ENCODE measurements at regions of chr6 and their contacts with region 1.

Region 1: DNA sequence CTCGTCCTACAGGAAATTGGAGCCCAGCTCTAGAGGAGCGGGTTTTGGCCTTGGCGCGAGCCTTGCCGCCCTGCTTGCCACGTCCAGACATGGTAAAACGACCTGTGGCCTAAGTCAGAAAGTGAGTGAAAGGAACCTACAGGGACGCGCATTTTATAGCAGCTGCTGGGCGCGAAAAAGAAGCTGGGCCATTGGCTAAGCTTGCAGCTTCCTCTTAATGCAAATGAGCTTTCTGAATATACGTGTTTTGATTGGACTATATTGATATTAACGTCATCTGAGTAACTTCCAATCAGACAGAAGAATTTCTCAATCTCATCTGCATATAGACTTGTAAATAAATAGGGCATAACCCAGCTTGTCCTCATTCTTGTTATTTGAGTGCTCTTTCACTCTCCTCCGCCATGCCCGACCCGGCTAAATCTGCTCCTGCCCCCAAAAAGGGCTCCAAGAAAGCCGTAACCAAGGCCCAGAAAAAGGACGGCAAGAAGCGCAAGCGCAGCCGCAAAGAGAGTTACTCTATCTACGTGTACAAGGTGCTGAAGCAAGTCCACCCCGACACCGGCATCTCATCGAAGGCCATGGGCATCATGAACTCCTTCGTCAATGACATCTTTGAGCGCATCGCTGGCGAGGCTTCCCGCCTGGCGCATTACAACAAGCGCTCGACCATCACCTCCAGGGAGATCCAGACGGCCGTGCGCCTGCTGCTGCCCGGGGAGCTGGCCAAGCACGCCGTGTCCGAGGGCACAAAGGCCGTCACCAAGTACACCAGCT is 18.9 kb downstream of the OR2B2 start:
- DNase-seq: peak; percentile 92
- ATAC-seq: peak; percentile 63
- H3K4me3 Mint-ChIP-seq: no peak overlapping the region
- H3K27ac Mint-ChIP-seq: no peak overlapping the region
- H3K4me1 Mint-ChIP-seq: peaks cover 28% of the 10 kb centered on the region
- H3K27me3 Mint-ChIP-seq: no peaks in the 10 kb centered on the region
- CTCF ChIP-seq: no peak

Region 2: DNA sequence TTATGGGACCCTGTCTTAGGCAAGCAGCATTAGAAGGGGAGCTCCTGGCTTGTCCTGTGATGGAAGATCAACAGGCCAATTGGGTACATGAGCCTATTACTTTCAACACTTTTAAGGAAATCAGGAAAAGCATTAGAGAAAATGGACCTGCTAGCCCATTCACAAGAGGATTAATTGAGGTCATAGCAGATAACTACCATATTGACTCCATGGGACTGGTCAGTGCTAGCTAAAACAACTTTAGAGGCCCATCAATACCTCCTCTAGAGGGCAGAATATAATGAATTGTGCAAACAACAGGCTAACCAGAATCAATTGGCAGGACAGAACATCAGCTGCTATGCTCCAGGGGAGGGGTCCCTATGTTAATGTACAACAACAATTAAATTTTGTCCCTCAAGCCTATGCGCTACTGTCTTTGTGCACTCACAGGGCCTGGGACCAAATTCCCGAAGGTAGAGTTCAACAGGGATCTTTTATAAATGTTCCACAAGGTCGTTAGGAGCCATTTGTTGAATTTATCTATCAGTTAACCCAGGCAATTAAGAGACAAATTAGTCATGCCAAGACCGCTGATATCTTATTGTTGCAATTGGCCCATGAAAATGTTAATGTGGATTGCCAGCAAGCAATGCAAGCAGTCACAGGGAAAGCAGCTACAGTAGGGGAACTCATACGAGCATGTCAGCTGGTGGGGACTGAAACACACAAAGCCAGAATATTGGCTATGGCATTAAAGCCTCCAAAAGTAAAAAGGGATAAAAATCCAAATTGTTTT is 1634.9 kb before region 1 on chr6:
- CTCF ChIA-PET with region 1: no interaction called
- POLR2A ChIA-PET with region 1: no interaction called
- intact Hi-C with region 1: no loop called
- DNase-seq: no peak
- ATAC-seq: no peak
- H3K4me3 Mint-ChIP-seq: no peak overlapping the region
- H3K27ac Mint-ChIP-seq: no peak overlapping the region
- H3K4me1 Mint-ChIP-seq: peaks cover 5% of the 10 kb centered on the region
- H3K27me3 Mint-ChIP-seq: no peaks in the 10 kb centered on the region
- CTCF ChIP-seq: peak; percentile 18

Region 3: GRCh38 chr6:27138837-27139755 is 754.2 kb before region 1 on chr6:
- CTCF ChIA-PET with region 1: no interaction called
- POLR2A ChIA-PET with region 1: interaction called, 69 read pairs
- intact Hi-C with region 1: no loop called
- DNase-seq: peak; percentile 83
- ATAC-seq: peak; percentile 80
- H3K4me3 Mint-ChIP-seq: peak overlapping the region; percentile 95
- H3K27ac Mint-ChIP-seq: peak overlapping the region; percentile 98
- H3K4me1 Mint-ChIP-seq: peaks cover 33% of the 10 kb centered on the region
- H3K27me3 Mint-ChIP-seq: no peaks in the 10 kb centered on the region
- CTCF ChIP-seq: no peak

Region 4: GRCh38 chr6:27772261-27773001 is 120.8 kb before region 1 on chr6:
- CTCF ChIA-PET with region 1: interaction called, 43 read pairs
- POLR2A ChIA-PET with region 1: interaction called, 3 read pairs
- intact Hi-C with region 1: no loop called
- DNase-seq: peak; percentile 93
- ATAC-seq: peak; percentile 99
- H3K4me3 Mint-ChIP-seq: peak overlapping the region; percentile 29
- H3K27ac Mint-ChIP-seq: no peak overlapping the region
- H3K4me1 Mint-ChIP-seq: peaks cover 13% of the 10 kb centered on the region
- H3K27me3 Mint-ChIP-seq: peaks cover 14% of the 10 kb centered on the region
- CTCF ChIP-seq: peak; percentile 79

Region 5: DNA sequence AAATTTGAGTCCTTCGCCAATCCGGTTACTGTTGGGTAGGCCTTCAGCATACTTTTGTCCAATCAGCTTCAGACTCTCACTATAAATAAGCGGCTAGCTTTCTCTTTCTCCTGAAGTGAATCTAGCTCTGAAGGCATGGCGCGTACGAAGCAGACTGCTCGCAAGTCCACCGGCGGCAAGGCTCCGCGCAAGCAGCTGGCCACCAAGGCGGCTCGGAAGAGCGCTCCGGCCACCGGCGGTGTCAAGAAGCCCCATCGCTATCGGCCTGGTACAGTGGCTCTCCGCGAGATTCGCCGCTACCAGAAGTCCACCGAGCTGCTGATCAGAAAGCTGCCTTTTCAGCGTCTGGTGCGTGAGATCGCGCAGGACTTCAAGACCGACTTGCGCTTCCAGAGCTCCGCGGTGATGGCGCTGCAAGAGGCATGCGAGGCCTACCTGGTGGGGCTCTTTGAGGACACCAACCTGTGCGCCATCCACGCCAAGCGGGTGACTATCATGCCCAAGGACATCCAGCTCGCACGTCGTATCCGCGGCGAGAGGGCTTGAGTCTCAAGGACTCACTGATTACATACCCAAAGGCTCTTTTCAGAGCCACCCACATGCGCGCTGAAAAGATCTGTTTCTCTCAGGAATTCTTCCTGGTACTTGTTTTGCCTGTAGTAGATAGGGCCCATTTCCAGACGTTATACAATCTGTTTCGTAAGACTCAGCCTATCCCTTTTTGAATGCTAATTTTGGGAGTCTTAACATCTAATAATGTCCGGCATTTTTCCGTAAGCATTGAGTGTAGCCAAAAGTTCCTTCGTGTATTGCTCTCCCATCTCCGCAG is 83.1 kb before region 1 on chr6:
- CTCF ChIA-PET with region 1: interaction called, 63 read pairs
- POLR2A ChIA-PET with region 1: interaction called, 351 read pairs
- intact Hi-C with region 1: no loop called
- DNase-seq: peak; percentile 78
- ATAC-seq: peak; percentile 38
- H3K4me3 Mint-ChIP-seq: peak overlapping the region; percentile 88
- H3K27ac Mint-ChIP-seq: peak overlapping the region; percentile 87
- H3K4me1 Mint-ChIP-seq: peaks cover 56% of the 10 kb centered on the region
- H3K27me3 Mint-ChIP-seq: no peaks in the 10 kb centered on the region
- CTCF ChIP-seq: no peak

Region 6: DNA sequence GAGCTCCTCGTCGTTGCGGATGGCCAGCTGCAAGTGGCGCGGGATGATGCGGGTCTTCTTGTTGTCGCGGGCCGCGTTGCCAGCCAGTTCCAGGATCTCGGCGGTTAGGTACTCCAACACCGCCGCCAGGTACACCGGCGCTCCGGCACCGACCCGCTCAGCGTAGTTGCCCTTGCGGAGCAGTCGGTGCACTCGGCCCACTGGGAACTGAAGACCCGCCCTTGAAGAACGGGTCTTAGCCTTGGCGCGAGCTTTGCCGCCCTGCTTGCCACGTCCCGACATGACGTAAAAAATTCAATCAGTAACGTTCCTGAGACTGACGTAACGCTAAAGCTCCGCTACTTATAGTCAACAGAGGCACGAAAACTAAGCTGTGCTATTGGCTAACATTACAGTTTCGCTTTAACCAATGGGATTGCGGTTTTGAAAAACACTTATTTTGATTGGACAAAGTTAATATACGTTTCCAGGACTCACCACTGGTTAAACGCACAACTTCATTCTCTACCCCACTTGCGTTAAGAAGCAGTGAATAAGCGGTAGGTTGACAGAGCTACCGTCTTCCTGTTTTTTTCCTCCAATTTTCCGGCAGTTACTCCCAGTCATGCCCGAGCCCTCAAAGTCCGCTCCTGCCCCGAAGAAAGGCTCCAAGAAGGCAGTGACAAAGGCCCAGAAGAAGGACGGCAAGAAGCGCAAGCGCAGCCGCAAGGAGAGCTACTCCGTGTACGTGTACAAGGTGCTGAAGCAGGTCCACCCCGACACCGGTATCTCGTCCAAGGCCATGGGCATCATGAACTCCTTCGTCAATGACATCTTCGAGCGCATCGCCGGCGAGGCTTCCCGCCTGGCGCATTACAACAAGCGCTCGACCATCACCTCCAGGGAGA is 54.9 kb before region 1 on chr6:
- CTCF ChIA-PET with region 1: interaction called, 66 read pairs
- POLR2A ChIA-PET with region 1: interaction called, 356 read pairs
- intact Hi-C with region 1: loop called (anchors 1 kb)
- DNase-seq: peak; percentile 87
- ATAC-seq: peak; percentile 73
- H3K4me3 Mint-ChIP-seq: no peak overlapping the region
- H3K27ac Mint-ChIP-seq: no peak overlapping the region
- H3K4me1 Mint-ChIP-seq: peaks cover 20% of the 10 kb centered on the region
- H3K27me3 Mint-ChIP-seq: no peaks in the 10 kb centered on the region
- CTCF ChIP-seq: no peak

Region 7: DNA sequence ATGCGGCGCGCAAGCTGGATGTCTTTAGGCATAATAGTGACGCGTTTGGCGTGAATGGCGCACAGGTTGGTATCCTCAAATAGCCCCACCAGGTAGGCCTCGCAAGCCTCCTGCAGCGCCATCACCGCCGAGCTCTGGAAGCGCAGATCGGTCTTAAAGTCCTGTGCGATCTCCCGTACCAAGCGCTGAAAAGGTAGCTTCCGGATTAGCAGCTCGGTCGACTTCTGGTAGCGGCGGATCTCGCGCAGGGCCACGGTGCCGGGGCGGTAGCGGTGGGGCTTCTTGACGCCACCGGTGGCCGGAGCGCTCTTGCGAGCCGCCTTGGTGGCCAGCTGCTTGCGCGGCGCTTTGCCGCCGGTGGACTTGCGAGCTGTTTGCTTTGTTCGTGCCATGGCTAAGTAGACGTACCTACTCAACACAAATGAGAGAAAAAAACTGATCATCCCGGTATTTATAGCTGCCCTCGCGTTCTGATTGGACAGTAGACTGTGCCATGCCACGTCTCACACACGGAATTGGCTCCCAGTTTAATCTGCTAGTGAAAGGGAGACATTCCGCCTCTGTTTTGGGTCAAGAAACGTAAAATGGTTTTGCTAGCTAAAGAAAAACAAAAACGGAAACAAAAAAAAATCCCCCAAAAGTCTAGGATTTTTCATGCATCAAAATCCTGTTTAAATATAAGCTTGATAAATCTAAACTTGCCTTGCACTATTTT is 21.2 kb before region 1 on chr6:
- CTCF ChIA-PET with region 1: interaction called, 157 read pairs
- POLR2A ChIA-PET with region 1: interaction called, 785 read pairs
- intact Hi-C with region 1: loop called (anchors 1 kb)
- DNase-seq: peak; percentile 85
- ATAC-seq: peak; percentile 61
- H3K4me3 Mint-ChIP-seq: peak overlapping the region; percentile 93
- H3K27ac Mint-ChIP-seq: peak overlapping the region; percentile 99
- H3K4me1 Mint-ChIP-seq: peaks cover 26% of the 10 kb centered on the region
- H3K27me3 Mint-ChIP-seq: no peaks in the 10 kb centered on the region
- CTCF ChIP-seq: peak; percentile 27

Region 8: DNA sequence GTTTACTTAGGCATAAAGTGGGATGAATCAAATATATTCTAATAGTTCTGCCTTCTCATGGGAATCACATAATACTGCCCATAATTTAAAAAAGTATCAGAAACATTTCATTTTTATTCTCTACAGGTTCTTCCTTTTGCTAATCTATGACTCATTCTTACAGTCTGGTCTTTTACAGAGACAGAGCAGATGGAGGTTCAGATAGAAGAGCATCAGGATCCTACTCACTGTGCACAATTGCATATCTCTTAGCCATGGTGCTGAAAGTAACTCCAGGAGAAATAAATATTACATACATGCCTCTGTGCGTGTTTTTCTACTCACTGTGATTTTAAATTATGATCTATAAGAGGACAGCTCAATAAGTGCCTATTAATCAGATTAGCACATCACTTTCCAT is 47.5 kb after region 1 on chr6:
- CTCF ChIA-PET with region 1: no interaction called
- POLR2A ChIA-PET with region 1: no interaction called
- intact Hi-C with region 1: no loop called
- DNase-seq: no peak
- ATAC-seq: no peak
- H3K4me3 Mint-ChIP-seq: no peak overlapping the region
- H3K27ac Mint-ChIP-seq: no peak overlapping the region
- H3K4me1 Mint-ChIP-seq: no peaks in the 10 kb centered on the region
- H3K27me3 Mint-ChIP-seq: peaks cover 42% of the 10 kb centered on the region
- CTCF ChIP-seq: no peak

Region 9: DNA sequence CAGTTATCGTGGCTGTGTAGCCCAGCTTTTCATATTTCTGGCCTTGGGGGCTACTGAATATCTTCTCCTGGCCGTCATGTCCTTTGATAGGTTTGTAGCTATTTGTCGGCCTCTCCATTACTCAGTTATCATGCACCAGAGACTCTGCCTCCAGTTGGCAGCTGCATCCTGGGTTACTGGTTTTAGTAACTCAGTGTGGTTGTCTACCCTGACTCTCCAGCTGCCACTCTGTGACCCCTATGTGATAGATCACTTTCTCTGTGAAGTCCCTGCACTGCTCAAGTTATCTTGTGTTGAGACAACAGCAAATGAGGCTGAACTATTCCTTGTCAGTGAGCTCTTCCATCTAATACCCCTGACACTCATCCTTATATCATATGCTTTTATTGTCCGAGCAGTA is 64.3 kb after region 1 on chr6:
- CTCF ChIA-PET with region 1: no interaction called
- POLR2A ChIA-PET with region 1: no interaction called
- intact Hi-C with region 1: no loop called
- DNase-seq: no peak
- ATAC-seq: no peak
- H3K4me3 Mint-ChIP-seq: no peak overlapping the region
- H3K27ac Mint-ChIP-seq: no peak overlapping the region
- H3K4me1 Mint-ChIP-seq: no peaks in the 10 kb centered on the region
- H3K27me3 Mint-ChIP-seq: peaks cover 30% of the 10 kb centered on the region
- CTCF ChIP-seq: no peak

Region 10: GRCh38 chr6:28863604-28864320 is 970.5 kb after region 1 on chr6:
- CTCF ChIA-PET with region 1: no interaction called
- POLR2A ChIA-PET with region 1: interaction called, 11 read pairs
- intact Hi-C with region 1: no loop called
- DNase-seq: peak; percentile 89
- ATAC-seq: peak; percentile 54
- H3K4me3 Mint-ChIP-seq: peak overlapping the region; percentile 89
- H3K27ac Mint-ChIP-seq: peak overlapping the region; percentile 84
- H3K4me1 Mint-ChIP-seq: peaks cover 30% of the 10 kb centered on the region
- H3K27me3 Mint-ChIP-seq: peaks cover 3% of the 10 kb centered on the region
- CTCF ChIP-seq: no peak